HEK293 (cell line): ENCODE measurements at regions of chr9 and their contacts with region 1.

Region 1: GRCh38 chr9:115531410-115532125 is 413.6 kb upstream of the TNC start:
- H3K4me3 ChIP-seq: no peak overlapping the region
- H3K27ac ChIP-seq: no peak overlapping the region
- H3K4me1 ChIP-seq: no peaks in the 10 kb centered on the region
- CTCF ChIP-seq: no peak

Region 2: DNA sequence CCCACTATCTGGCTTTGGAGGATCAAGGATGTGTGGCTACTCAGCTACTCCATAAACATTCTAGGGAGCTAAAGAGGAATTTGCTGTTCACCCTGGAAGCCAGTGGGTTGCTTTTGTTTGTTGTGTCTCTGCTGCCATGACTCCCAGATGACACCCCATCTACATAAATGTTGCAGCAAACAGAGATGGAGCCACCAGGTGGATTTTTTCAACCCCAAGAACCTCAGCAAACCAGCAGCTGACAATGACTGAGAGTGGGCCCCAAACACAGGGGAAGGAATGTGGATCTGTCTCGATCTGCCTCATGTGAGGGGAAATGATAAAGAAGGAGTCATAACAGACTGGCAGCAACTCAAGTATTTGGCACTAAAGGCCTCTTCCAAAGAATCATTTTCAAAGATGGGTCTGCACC is 280.9 kb before region 1 on chr9:
- CTCF ChIA-PET with region 1: no interaction called
- POLR2A ChIA-PET with region 1: no interaction called
- H3K4me3 ChIP-seq: no peak overlapping the region
- H3K27ac ChIP-seq: no peak overlapping the region
- H3K4me1 ChIP-seq: no peaks in the 10 kb centered on the region
- CTCF ChIP-seq: no peak

Region 3: DNA sequence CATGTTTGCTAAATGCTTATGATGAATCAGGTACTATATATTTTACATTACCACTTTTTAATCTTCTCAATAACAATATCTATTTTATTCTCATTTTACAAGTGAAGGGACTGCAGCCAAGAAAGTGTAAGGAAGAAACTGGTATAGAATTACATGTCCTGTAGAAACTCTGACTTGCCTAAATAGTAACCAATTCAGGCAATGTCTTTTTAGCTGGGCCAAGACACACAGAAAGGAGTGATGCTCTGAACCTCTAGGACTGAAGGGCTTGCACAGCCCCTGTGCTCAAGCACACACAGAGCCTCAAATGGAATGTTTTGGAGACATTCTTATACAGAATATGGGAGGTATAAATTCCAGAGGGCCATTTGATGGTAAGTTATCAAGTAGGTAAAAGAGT is 127.3 kb before region 1 on chr9:
- CTCF ChIA-PET with region 1: no interaction called
- POLR2A ChIA-PET with region 1: interaction called, 15 read pairs
- H3K4me3 ChIP-seq: no peak overlapping the region
- H3K27ac ChIP-seq: no peak overlapping the region
- H3K4me1 ChIP-seq: no peaks in the 10 kb centered on the region
- CTCF ChIP-seq: no peak

Region 4: DNA sequence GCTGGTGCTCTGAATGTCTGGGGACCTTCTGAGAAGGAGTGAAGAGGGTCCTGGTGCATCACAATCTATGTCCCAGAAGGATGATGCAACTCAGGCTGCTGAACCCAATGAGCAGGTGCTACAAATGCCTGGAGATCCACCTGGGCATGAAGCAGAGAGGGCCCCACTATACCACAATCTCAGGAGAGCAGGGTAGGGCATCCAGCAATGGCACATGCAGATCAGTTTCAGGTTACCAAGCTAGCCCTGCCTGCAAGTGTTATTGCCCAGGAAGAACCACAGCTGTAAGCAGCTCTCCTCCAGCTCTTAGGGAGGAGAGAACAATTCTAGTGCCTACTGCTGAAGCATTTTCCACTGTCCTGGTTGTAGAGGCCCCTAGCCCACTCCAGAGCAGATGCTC is 24.4 kb before region 1 on chr9:
- CTCF ChIA-PET with region 1: no interaction called
- POLR2A ChIA-PET with region 1: no interaction called
- H3K4me3 ChIP-seq: no peak overlapping the region
- H3K27ac ChIP-seq: no peak overlapping the region
- H3K4me1 ChIP-seq: no peaks in the 10 kb centered on the region
- CTCF ChIP-seq: no peak

Region 5: GRCh38 chr9:115517335-115518075 is 14.1 kb before region 1 on chr9:
- CTCF ChIA-PET with region 1: no interaction called
- POLR2A ChIA-PET with region 1: no interaction called
- H3K4me3 ChIP-seq: no peak overlapping the region
- H3K27ac ChIP-seq: no peak overlapping the region
- H3K4me1 ChIP-seq: no peaks in the 10 kb centered on the region
- CTCF ChIP-seq: no peak